ENCODE measurements at regions of chr7 and their contacts with region 1.

Region 1: GRCh38 chr7:139340037-139340807 is 915 bp upstream of the FMC1 start:
- DNase-seq: peak; percentile 98 to 100
- ATAC-seq: peak; percentile 86 to 89
- H3K4me3 ChIP-seq: peak overlapping the region; percentile 77 to 96 (median 86)
- H3K27ac ChIP-seq: peak overlapping the region; percentile 97 to 100 (median 100)
- H3K4me1 ChIP-seq: peaks cover 11 to 16% of the 10 kb centered on the region in 2 donors
- H3K27me3 ChIP-seq: no peaks in the 10 kb centered on the region
- CTCF ChIP-seq: peak; percentile 64 to 75 (median 72)
- POLR2A ChIP-seq: peak; percentile 56 to 66

Region 2: GRCh38 chr7:139109188-139109982 is 230.8 kb before region 1 on chr7 and contains the start of gene ZC3HAV1:
- in situ Hi-C with region 1: loop called in 1 of 4 experiments (anchors 25 kb)
- intact Hi-C with region 1: no loop called
- DNase-seq: peak; percentile 71 to 73
- ATAC-seq: peak; percentile 77 to 85
- H3K4me3 ChIP-seq: peak within 1 kb of the TSS; percentile 77 to 97 (median 90)
- H3K27ac ChIP-seq: peak within 1 kb of the TSS; percentile 84 to 92 (median 86)
- H3K4me1 ChIP-seq: peaks cover 5 to 6% of the 10 kb centered on the region in 2 donors
- H3K27me3 ChIP-seq: no peaks in the 10 kb centered on the region
- CTCF ChIP-seq: peak in 1 of 5 experiments; percentile 23
- POLR2A ChIP-seq: peak; percentile 45 to 67
- total RNA-seq, gene ZC3HAV1: 3.5 to 10.4 (median 4.5) TPM

Region 3: GRCh38 chr7:139133335-139134139 is 206.7 kb before region 1 on chr7:
- in situ Hi-C with region 1: no loop called
- intact Hi-C with region 1: loop called (anchors 5 kb)
- DNase-seq: peak; percentile 52 to 66
- ATAC-seq: peak; percentile 98 to 99
- H3K4me3 ChIP-seq: peak overlapping the region; percentile 60 to 70 (median 62)
- H3K27ac ChIP-seq: peak overlapping the region; percentile 37 to 64 (median 44)
- H3K4me1 ChIP-seq: peaks cover 9 to 14% of the 10 kb centered on the region in 2 donors
- H3K27me3 ChIP-seq: no peaks in the 10 kb centered on the region
- CTCF ChIP-seq: no peak
- POLR2A ChIP-seq: no peak

Region 4: GRCh38 chr7:139230774-139231512 is 109.3 kb before region 1 on chr7 and contains the start of gene UBN2:
- in situ Hi-C with region 1: no loop called
- intact Hi-C with region 1: loop called (anchors 1 kb)
- DNase-seq: peak; percentile 91 to 93
- ATAC-seq: peak; percentile 98
- H3K4me3 ChIP-seq: peak within 1 kb of the TSS; percentile 83 to 99 (median 92)
- H3K27ac ChIP-seq: peak within 1 kb of the TSS; percentile 88 to 99 (median 96)
- H3K4me1 ChIP-seq: peaks cover 32 to 40% of the 10 kb centered on the region in 2 donors
- H3K27me3 ChIP-seq: no peaks in the 10 kb centered on the region
- CTCF ChIP-seq: no peak
- POLR2A ChIP-seq: peak; percentile 49 to 79
- total RNA-seq, gene UBN2: 12.0 to 24.8 (median 17.2) TPM

Region 5: GRCh38 chr7:139246905-139247304 is 93.3 kb before region 1 on chr7:
- in situ Hi-C with region 1: no loop called
- intact Hi-C with region 1: loop called (anchors 5 kb)
- DNase-seq: peak; percentile 60 to 72
- ATAC-seq: peak; percentile 69 to 80
- H3K4me3 ChIP-seq: no peak overlapping the region
- H3K27ac ChIP-seq: peak overlapping the region; percentile 80 to 89 (median 83)
- H3K4me1 ChIP-seq: peaks cover 35 to 41% of the 10 kb centered on the region in 2 donors
- H3K27me3 ChIP-seq: no peaks in the 10 kb centered on the region
- CTCF ChIP-seq: no peak
- POLR2A ChIP-seq: no peak

Region 6: GRCh38 chr7:139560678-139561077 is 220.5 kb after region 1 on chr7:
- in situ Hi-C with region 1: no loop called
- intact Hi-C with region 1: no loop called
- DNase-seq: no peak
- ATAC-seq: no peak
- H3K4me3 ChIP-seq: no peak overlapping the region
- H3K27ac ChIP-seq: no peak overlapping the region
- H3K4me1 ChIP-seq: peaks cover 3 to 6% of the 10 kb centered on the region in 2 donors
- H3K27me3 ChIP-seq: no peaks in the 10 kb centered on the region
- CTCF ChIP-seq: no peak
- POLR2A ChIP-seq: no peak